GM12878 (cell line): ENCODE measurements at regions of chr1 and their contacts with region 1.

Region 1: GRCh38 chr1:202315576-202316168 is 26.1 kb downstream of the UBE2T start:
- DNase-seq: peak; percentile 19
- ATAC-seq: peak; percentile 97
- H3K4me3 ChIP-seq: no peak overlapping the region
- H3K27ac ChIP-seq: no peak overlapping the region
- H3K4me1 ChIP-seq: no peaks in the 10 kb centered on the region
- H3K27me3 ChIP-seq: peaks cover 0 to 1% of the 10 kb centered on the region in 2 experiments; a peak in 1 of 4 replicates
- CTCF ChIP-seq: peak; percentile 97 to 99 (median 98); a peak in 5 of 6 replicates
- EP300 ChIP-seq: no peak
- POLR2A ChIP-seq: no peak
- RAD21 ChIP-seq: peak; percentile 93

Region 2: DNA sequence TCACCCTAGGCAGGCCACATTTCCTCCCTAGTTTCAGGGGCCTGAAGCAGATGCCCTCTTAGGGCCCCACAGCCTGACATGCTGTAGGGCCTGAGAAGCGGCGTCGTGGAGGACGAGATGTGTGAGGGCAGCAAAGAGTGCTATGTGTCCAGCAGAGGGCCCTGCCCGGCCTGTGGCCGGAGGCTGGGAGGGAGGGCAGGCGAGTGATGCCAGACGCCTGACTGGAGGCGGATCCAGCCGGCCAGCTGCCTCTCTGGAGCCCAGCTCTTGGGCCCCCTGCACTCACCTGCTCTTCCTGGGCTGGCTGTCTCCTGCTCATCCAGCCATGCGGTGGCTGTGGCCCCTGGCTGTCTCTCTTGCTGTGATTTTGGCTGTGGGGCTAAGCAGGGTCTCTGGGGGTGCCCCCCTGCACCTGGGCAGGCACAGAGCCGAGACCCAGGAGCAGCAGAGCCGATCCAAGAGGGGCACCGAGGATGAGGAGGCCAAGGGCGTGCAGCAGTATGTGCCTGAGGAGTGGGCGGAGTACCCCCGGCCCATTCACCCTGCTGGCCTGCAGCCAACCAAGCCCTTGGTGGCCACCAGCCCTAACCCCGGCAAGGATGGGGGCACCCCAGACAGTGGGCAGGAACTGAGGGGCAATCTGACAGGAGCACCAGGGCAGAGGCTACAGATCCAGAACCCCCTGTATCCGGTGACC is 192.9 kb before region 1 on chr1 and contains the start of gene GPR37L1:
- CTCF ChIA-PET with region 1: no interaction called
- POLR2A ChIA-PET with region 1: no interaction called
- RAD21 ChIA-PET with region 1: no interaction called
- SMC1A ChIA-PET with region 1: no interaction called
- in situ Hi-C with region 1: no loop called
- intact Hi-C with region 1: no loop called
- DNase-seq: no peak
- ATAC-seq: no peak
- H3K4me3 ChIP-seq: no peak within 1 kb of the TSS
- H3K27ac ChIP-seq: no peak within 1 kb of the TSS
- H3K4me1 ChIP-seq: no peaks in the 10 kb centered on the region
- H3K27me3 ChIP-seq: peaks cover 0 to 2% of the 10 kb centered on the region in 2 experiments
- CTCF ChIP-seq: no peak
- EP300 ChIP-seq: no peak
- POLR2A ChIP-seq: no peak
- RAD21 ChIP-seq: no peak
- polyA plus RNA-seq, gene GPR37L1: under 0.01 to 0.02 TPM

Region 3: GRCh38 chr1:202154766-202155477 is 160.8 kb before region 1 on chr1:
- CTCF ChIA-PET with region 1: interaction called, 17 read pairs
- POLR2A ChIA-PET with region 1: no interaction called
- RAD21 ChIA-PET with region 1: interaction called, 6 read pairs
- SMC1A ChIA-PET with region 1: interaction called, 10 read pairs
- in situ Hi-C with region 1: no loop called
- intact Hi-C with region 1: no loop called
- DNase-seq: no peak
- ATAC-seq: peak; percentile 50
- H3K4me3 ChIP-seq: no peak overlapping the region
- H3K27ac ChIP-seq: no peak overlapping the region
- H3K4me1 ChIP-seq: peaks cover 16% of the 10 kb centered on the region
- H3K27me3 ChIP-seq: no peaks in the 10 kb centered on the region
- CTCF ChIP-seq: peak; percentile 65 to 70 (median 68); a peak in 5 of 6 replicates
- EP300 ChIP-seq: no peak
- POLR2A ChIP-seq: no peak
- RAD21 ChIP-seq: peak; percentile 65

Region 4: GRCh38 chr1:202184750-202185460 is 130.8 kb before region 1 on chr1:
- CTCF ChIA-PET with region 1: interaction called, 34 read pairs
- POLR2A ChIA-PET with region 1: interaction called, 3 read pairs
- RAD21 ChIA-PET with region 1: interaction called, 7 read pairs
- SMC1A ChIA-PET with region 1: interaction called, 19 read pairs
- in situ Hi-C with region 1: loop called (anchors 5 kb)
- intact Hi-C with region 1: loop called (anchors 1 kb)
- DNase-seq: no peak
- ATAC-seq: peak; percentile 84
- H3K4me3 ChIP-seq: no peak overlapping the region
- H3K27ac ChIP-seq: no peak overlapping the region
- H3K4me1 ChIP-seq: no peaks in the 10 kb centered on the region; the same call in 1 of the 2 replicates
- H3K27me3 ChIP-seq: peaks cover 0 to 3% of the 10 kb centered on the region in 2 experiments; a peak in 2 of 4 replicates
- CTCF ChIP-seq: peak; percentile 78 to 92 (median 89)
- EP300 ChIP-seq: no peak
- POLR2A ChIP-seq: no peak
- RAD21 ChIP-seq: peak; percentile 46

Region 5: DNA sequence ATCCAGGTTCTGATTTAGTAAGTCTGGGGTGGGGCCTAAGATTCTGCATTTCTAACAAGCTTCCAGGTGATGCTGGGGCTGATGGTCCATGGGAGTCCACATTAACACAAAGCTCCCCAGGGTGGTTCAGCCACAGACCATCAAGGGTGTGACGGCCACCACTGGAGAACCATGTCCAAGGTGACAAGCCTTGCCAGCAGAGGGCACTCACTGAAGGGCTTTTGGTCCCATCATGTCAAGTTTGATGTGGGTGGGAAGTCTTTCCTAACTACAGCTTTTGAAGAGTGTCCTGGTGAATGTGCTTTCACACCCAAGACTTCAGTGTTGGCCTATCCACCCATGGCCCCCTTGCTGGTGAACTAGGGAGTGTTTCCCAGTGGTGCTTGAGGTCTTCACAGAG is 41.1 kb before region 1 on chr1:
- CTCF ChIA-PET with region 1: interaction called, 21 read pairs
- POLR2A ChIA-PET with region 1: no interaction called
- RAD21 ChIA-PET with region 1: interaction called, 6 read pairs
- SMC1A ChIA-PET with region 1: interaction called, 17 read pairs
- in situ Hi-C with region 1: no loop called
- intact Hi-C with region 1: loop called (anchors 1 kb)
- DNase-seq: no peak
- ATAC-seq: peak; percentile 82
- H3K4me3 ChIP-seq: no peak overlapping the region
- H3K27ac ChIP-seq: no peak overlapping the region
- H3K4me1 ChIP-seq: no peaks in the 10 kb centered on the region
- H3K27me3 ChIP-seq: peaks cover 0 to 2% of the 10 kb centered on the region in 2 experiments; a peak in 1 of 4 replicates
- CTCF ChIP-seq: peak; percentile 48 to 71 (median 57)
- EP300 ChIP-seq: no peak
- POLR2A ChIP-seq: no peak
- RAD21 ChIP-seq: peak; percentile 48

Region 6: GRCh38 chr1:202329891-202330290 is 14.2 kb after region 1 on chr1:
- CTCF ChIA-PET with region 1: interaction called, 14 read pairs
- POLR2A ChIA-PET with region 1: interaction called, 3 read pairs
- RAD21 ChIA-PET with region 1: interaction called, 4 read pairs
- SMC1A ChIA-PET with region 1: no interaction called
- in situ Hi-C with region 1: no loop called
- intact Hi-C with region 1: no loop called
- DNase-seq: no peak
- ATAC-seq: no peak
- H3K4me3 ChIP-seq: no peak overlapping the region
- H3K27ac ChIP-seq: no peak overlapping the region
- H3K4me1 ChIP-seq: no peaks in the 10 kb centered on the region
- H3K27me3 ChIP-seq: no peaks in the 10 kb centered on the region
- CTCF ChIP-seq: 0 out of 6 replicates have a peak, but pooled peaks of 1 of the 3 experiments have one; percentile 6
- EP300 ChIP-seq: no peak
- POLR2A ChIP-seq: no peak
- RAD21 ChIP-seq: no peak

Region 7: DNA sequence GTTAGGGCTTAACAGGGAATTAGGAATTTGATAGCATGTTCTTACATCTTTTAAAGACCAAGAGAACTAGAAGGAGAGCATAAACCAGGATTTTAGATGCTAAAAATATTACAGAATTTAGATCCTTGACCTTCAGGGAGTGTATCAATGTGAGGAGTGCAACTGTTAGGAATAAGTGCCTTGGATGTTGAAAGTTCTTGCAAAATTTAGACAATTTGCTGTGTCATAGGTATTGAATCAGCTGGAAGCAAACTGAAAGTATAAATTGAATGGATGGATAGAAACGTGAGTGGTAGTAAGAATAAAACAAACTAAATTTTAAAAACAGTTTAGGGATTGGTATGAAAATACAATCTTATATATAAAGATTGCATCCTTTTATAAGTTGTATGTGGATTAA is 60.6 kb after region 1 on chr1:
- CTCF ChIA-PET with region 1: no interaction called
- POLR2A ChIA-PET with region 1: no interaction called
- RAD21 ChIA-PET with region 1: no interaction called
- SMC1A ChIA-PET with region 1: no interaction called
- in situ Hi-C with region 1: no loop called
- intact Hi-C with region 1: no loop called
- DNase-seq: no peak
- ATAC-seq: no peak
- H3K4me3 ChIP-seq: no peak overlapping the region
- H3K27ac ChIP-seq: no peak overlapping the region
- H3K4me1 ChIP-seq: peaks cover 7% of the 10 kb centered on the region
- H3K27me3 ChIP-seq: no peaks in the 10 kb centered on the region
- CTCF ChIP-seq: no peak
- EP300 ChIP-seq: no peak
- POLR2A ChIP-seq: no peak
- RAD21 ChIP-seq: no peak

Region 8: GRCh38 chr1:202599677-202600431 is 284.2 kb after region 1 on chr1:
- CTCF ChIA-PET with region 1: no interaction called
- POLR2A ChIA-PET with region 1: no interaction called
- RAD21 ChIA-PET with region 1: no interaction called
- SMC1A ChIA-PET with region 1: no interaction called
- in situ Hi-C with region 1: no loop called
- intact Hi-C with region 1: no loop called
- DNase-seq: no peak
- ATAC-seq: peak; percentile 95
- H3K4me3 ChIP-seq: no peak overlapping the region
- H3K27ac ChIP-seq: no peak overlapping the region
- H3K4me1 ChIP-seq: peaks cover 3% of the 10 kb centered on the region
- H3K27me3 ChIP-seq: no peaks in the 10 kb centered on the region; a peak in 3 of 4 replicates
- CTCF ChIP-seq: peak; percentile 79 to 86 (median 81)
- EP300 ChIP-seq: no peak
- POLR2A ChIP-seq: no peak
- RAD21 ChIP-seq: peak; percentile 79